CD4-positive, alpha-beta memory T cell (primary cell): ENCODE measurements at regions of chr4 and their contacts with region 1.

Region 1: DNA sequence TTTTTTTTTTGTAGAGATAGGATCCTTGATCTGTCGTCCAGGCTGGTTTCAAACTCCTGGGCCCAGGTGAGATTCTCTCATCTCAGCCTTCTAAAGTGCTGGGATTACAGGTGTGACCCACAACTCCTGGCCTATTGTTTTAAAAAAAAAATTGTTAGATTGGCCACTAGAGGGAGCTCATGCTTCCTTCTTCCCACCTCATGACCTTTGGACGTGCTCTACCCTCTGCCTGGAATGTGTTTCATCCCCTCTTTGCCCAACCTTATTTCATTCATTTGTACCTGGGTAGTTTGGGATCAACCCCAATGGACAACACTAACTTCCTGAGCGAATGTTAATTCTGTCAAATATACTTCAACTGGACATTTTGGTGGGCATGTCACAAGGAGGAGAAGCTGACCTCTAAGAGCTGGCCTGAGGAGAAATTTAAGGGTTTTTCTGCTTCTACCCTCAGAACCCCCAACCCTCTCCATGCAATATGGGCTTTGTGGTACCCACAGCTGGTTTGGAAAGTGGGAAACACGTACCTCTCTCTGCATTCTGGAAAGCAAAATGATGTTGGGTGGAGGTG is 6.4 kb downstream of the PPEF2 start:
- DNase-seq: peak in 4 of 5 donors; percentile 26 to 49 (median 36)
- H3K4me3 ChIP-seq: no peak overlapping the region
- H3K4me3 Mint-ChIP-seq: no peak overlapping the region
- H3K27ac ChIP-seq: no peak overlapping the region
- H3K27ac Mint-ChIP-seq: no peak overlapping the region
- H3K4me1 ChIP-seq: no peaks in the 10 kb centered on the region
- H3K4me1 Mint-ChIP-seq: peaks cover 0 to 3% (median under 1%) of the 10 kb centered on the region in 4 donors
- H3K27me3 ChIP-seq: no peaks in the 10 kb centered on the region
- H3K27me3 Mint-ChIP-seq: no peaks in the 10 kb centered on the region

Region 2: DNA sequence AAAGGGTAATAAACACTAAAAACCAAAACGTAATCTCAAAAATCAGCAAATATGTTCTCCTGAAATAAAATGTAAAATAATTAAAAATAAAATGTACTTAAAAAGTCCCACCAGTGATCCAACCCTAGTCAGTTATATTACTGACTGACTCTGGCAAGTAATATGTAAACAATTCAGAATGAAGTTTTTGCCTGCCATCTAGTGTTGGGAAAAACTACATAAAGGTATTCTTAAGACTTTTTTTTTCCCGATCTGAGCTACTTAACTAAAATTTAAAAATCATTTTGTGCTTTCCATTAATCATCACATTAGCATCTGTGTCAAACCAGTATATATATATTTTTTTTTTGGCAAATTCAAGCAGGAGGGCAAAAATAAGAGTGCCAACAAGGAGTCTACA is 405.7 kb before region 1 on chr4:
- CTCF ChIA-PET with region 1: no interaction called
- POLR2A ChIA-PET with region 1: no interaction called
- intact Hi-C with region 1: no loop called
- DNase-seq: no peak
- H3K4me3 ChIP-seq: no peak overlapping the region
- H3K4me3 Mint-ChIP-seq: no peak overlapping the region
- H3K27ac ChIP-seq: no peak overlapping the region
- H3K27ac Mint-ChIP-seq: no peak overlapping the region
- H3K4me1 ChIP-seq: no peaks in the 10 kb centered on the region
- H3K4me1 Mint-ChIP-seq: peaks cover 0 to 6% (median 0%) of the 10 kb centered on the region in 4 donors
- H3K27me3 ChIP-seq: no peaks in the 10 kb centered on the region
- H3K27me3 Mint-ChIP-seq: no peaks in the 10 kb centered on the region

Region 3: GRCh38 chr4:75908555-75908954 is 12.7 kb after region 1 on chr4:
- CTCF ChIA-PET with region 1: interaction called, 31 read pairs
- POLR2A ChIA-PET with region 1: no interaction called
- intact Hi-C with region 1: no loop called
- DNase-seq: no peak
- H3K4me3 ChIP-seq: no peak overlapping the region
- H3K4me3 Mint-ChIP-seq: no peak overlapping the region
- H3K27ac ChIP-seq: no peak overlapping the region
- H3K27ac Mint-ChIP-seq: no peak overlapping the region
- H3K4me1 ChIP-seq: no peaks in the 10 kb centered on the region
- H3K4me1 Mint-ChIP-seq: no peaks in the 10 kb centered on the region
- H3K27me3 ChIP-seq: no peaks in the 10 kb centered on the region
- H3K27me3 Mint-ChIP-seq: no peaks in the 10 kb centered on the region

Region 4: DNA sequence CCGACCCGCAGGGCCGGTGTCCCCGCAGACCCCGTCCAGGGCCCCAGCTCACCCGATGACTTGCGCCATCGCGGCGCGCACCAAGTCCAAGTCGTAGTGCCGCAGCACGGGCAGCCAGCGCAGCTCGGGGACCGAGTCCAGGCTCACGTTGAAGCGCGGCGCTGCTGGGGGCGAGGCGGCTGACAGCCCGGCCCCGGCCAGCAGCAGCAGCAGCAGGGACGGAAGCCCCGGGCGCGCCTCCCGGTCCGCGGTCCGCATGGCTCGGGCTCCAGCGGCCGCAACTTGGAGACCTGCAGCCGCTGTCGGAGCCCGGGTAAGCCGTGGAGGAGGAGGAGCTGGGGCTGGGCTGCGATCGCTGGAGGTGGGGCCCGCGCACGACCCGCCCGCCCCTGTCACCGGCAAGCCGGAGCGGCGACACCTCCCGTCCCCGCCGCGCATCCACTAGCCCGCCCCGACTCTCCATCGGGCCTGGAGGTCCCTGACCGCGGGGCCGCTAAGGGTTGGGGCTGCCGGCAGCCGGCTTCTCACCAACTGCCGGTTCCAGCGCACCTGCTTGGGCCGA is 44.9 kb after region 1 on chr4 and contains the start of gene NAAA:
- CTCF ChIA-PET with region 1: interaction called, 5 read pairs
- POLR2A ChIA-PET with region 1: interaction called, 3 read pairs
- intact Hi-C with region 1: loop called (anchors 1 kb)
- DNase-seq: peak; percentile 73 to 84 (median 80)
- H3K4me3 ChIP-seq: peak within 1 kb of the TSS; percentile 80 to 98
- H3K4me3 Mint-ChIP-seq: peak within 1 kb of the TSS; percentile 97 to 99 (median 98)
- H3K27ac ChIP-seq: peak within 1 kb of the TSS; percentile 75
- H3K27ac Mint-ChIP-seq: peak within 1 kb of the TSS; percentile 96 to 98 (median 98)
- H3K4me1 ChIP-seq: peaks cover 19% of the 10 kb centered on the region
- H3K4me1 Mint-ChIP-seq: peaks cover 10 to 35% (median 19%) of the 10 kb centered on the region in 4 donors
- H3K27me3 ChIP-seq: no peaks in the 10 kb centered on the region
- H3K27me3 Mint-ChIP-seq: no peaks in the 10 kb centered on the region
- total RNA-seq, gene NAAA: 86.1 to 92.2 TPM

Region 5: DNA sequence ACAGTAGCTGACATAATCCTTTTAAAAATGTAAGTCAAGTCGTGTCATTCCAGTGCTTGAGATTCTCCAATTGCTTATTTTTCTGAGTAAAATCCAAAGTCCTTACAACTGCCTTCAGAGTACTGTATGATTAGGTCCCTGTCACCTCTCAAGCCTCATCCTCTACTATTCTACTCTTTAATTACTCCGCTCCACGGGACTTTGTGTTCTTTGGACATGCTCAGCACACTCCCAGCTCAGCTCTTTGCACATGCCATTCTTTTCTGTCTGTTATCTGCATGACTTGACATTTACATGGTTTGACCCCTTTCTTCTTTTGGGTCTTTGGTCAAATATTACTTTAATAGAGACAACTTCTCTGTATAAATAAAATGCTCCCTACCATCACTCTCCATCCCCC is 370.8 kb after region 1 on chr4:
- CTCF ChIA-PET with region 1: no interaction called
- POLR2A ChIA-PET with region 1: no interaction called
- intact Hi-C with region 1: no loop called
- DNase-seq: no peak
- H3K4me3 ChIP-seq: no peak overlapping the region
- H3K4me3 Mint-ChIP-seq: no peak overlapping the region
- H3K27ac ChIP-seq: no peak overlapping the region
- H3K27ac Mint-ChIP-seq: no peak overlapping the region
- H3K4me1 ChIP-seq: no peaks in the 10 kb centered on the region
- H3K4me1 Mint-ChIP-seq: no peaks in the 10 kb centered on the region
- H3K27me3 ChIP-seq: no peaks in the 10 kb centered on the region
- H3K27me3 Mint-ChIP-seq: peaks cover 0 to 6% of the 10 kb centered on the region in 2 donors

Region 6: DNA sequence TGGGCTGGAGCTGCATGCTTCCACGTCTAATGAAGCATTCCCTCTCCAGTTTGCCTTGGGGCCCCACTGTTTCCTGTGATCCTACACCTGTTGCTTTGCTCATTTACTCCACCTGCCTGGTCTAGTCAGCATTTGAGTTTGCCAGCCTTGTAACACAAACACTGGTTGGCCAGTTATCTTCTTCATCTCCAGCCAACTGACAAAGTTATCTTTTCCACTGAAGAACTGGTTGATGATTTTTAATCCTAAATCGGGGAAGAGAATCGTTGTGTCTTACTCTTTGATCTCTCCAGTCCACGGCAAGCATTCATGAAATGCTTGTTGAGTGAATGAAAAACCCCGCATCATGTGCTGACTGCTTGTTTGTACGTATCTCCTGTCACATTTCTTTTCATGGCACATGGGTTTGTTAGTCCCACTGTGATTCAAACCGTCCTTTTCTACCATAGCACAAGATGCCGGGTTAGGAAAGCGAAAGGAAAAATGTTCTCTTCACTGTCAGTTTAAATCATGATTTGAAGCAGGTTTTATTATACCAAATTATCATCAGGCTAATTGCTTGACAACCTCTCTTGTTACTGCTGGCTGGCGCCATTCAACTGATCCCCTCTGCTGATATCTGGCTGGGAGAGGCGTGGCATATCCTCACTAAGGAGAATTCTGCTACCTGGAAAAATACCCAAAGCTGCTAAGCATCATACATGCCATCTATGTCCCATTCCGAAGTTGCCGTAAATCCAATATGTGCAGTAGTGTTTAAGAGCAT is 684.0 kb after region 1 on chr4:
- CTCF ChIA-PET with region 1: no interaction called
- POLR2A ChIA-PET with region 1: no interaction called
- intact Hi-C with region 1: no loop called
- DNase-seq: no peak
- H3K4me3 ChIP-seq: no peak overlapping the region
- H3K4me3 Mint-ChIP-seq: no peak overlapping the region
- H3K27ac ChIP-seq: no peak overlapping the region
- H3K27ac Mint-ChIP-seq: no peak overlapping the region
- H3K4me1 ChIP-seq: no peaks in the 10 kb centered on the region
- H3K4me1 Mint-ChIP-seq: no peaks in the 10 kb centered on the region
- H3K27me3 ChIP-seq: no peaks in the 10 kb centered on the region
- H3K27me3 Mint-ChIP-seq: peaks cover 33 to 45% of the 10 kb centered on the region in 2 donors